ENCODE measurements at regions of chr2 and their contacts with region 1.

Region 1: GRCh38 chr2:219177552-219178376 is at the start of gene RETREG2:
- DNase-seq: peak; percentile 95
- H3K4me3 ChIP-seq: peak within 1 kb of the TSS; percentile 88
- H3K27ac ChIP-seq: peak within 1 kb of the TSS; percentile 92
- H3K4me1 ChIP-seq: peaks cover 18% of the 10 kb centered on the region
- CTCF ChIP-seq: peak; percentile 57
- total RNA-seq, gene RETREG2: 44.9 and 59.1 TPM in 2 replicates

Region 2: DNA sequence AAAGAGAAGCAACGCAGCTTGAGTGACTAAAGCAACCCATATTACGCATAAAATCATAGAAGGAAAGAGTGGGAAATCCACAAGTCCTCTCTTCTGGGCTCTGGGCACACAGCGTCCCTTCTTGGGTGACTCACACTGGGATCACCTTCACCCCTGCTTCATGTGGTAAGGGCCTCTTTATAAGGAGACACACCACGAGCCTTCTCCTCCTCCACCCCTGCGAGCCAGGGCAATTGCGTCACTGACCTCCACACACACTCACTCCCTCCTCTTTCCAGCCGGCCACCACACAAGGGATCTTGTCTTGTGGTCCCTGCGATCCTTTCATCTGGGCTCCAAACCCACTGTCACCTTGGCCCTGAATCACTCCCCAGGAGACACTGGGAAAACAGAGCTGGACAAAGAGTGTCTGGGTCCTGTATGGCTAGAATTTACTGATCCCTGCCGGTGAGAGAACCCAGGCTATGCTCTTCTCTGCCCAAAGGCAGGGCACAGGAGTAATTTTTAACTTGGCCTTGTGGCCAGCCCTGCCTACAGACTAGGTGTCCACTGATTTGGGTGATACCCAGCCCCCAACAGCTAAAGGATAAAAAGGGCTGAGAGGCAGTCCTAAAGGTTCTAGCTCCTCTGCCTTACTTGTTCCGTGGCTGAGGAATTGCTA is 52.4 kb before region 1 on chr2:
- CTCF ChIA-PET with region 1: no interaction called
- POLR2A ChIA-PET with region 1: no interaction called
- intact Hi-C with region 1: no loop called
- DNase-seq: no peak
- H3K4me3 ChIP-seq: no peak overlapping the region
- H3K27ac ChIP-seq: no peak overlapping the region
- H3K4me1 ChIP-seq: no peaks in the 10 kb centered on the region
- CTCF ChIP-seq: no peak

Region 3: DNA sequence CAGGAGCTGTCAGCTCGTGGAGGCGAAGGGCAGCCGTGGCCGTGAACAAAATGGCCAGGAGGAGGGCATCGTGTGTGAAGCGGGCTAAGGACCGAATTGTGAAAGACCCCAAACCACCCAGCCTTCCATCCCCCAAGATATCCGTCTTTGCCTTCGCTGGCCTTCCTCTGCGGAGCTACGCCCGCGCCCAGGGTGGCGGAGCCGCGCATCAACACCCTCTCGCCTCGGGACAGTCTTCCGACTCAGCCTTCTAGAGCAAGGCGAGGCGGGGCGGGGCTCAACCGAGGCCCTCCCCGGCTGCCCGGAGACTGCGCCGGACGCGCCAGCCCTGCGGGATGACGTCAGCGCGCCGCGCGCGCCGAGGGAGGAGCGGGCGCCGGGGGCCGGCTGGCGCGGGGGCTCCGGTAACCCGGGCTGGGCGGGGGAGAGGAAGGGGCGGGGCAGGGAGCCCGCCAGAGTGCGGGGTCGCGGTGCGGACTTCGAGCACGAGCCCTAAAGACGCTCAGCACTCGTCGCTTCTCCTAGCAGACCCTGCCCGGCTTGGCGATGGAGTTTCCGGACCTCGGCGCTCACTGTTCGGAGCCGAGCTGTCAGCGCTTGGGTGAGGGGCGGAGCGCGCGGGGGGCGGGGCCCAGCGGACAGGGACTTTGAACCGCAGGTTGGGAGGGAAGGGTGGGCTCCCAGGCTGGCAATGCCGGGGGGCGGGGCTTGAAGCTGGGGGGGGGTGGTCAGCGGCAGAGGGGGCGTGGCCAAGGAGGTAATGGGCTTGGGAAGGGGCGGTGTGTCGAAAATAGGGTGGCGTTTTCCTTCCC is 28.9 kb after region 1 on chr2 and contains the start of gene ZFAND2B:
- CTCF ChIA-PET with region 1: interaction called, 3 read pairs
- POLR2A ChIA-PET with region 1: interaction called, 23 read pairs
- intact Hi-C with region 1: loop called (anchors 1 kb)
- DNase-seq: peak; percentile 97
- H3K4me3 ChIP-seq: peak within 1 kb of the TSS; percentile 69
- H3K27ac ChIP-seq: peak within 1 kb of the TSS; percentile 76
- H3K4me1 ChIP-seq: peaks cover 17% of the 10 kb centered on the region
- CTCF ChIP-seq: no peak
- total RNA-seq, gene ZFAND2B: 42.4 and 51.6 TPM in 2 replicates

Region 4: DNA sequence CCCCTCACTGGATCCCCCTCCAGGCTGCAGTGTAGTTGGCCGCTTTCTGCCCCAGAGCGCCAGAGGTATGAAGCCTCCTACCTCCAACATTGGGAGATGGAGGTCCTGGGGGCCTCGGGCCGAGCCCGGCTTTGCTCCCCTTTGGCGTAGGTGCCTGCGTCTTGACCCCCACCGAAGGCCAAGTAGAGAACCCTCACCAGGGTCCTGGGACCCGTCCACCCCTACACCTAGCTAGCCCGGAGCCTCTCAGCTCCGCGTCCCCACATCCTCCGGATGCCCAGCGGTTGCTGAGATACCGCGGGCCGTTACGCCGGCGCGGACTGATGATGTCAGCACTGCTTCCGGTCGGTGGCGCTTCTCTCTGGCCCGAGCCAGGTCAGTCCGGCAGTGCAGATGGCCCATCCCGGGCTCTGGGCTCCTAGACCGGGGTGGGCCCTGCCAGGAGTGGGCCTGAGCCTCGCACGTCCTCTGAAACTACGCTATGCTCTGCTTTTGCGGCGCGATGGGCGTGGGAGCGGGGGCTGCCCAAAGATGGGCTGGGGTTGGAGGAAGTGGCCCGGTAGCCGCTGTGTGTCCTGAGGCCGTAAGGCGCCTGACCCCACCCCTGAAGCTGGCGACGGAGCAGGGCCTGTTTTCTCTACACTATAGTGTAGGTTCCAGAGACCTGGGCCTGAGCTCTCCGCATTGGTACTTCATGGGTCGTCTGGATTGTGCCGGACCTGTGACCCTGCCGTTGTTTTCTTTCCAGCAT is 67.6 kb after region 1 on chr2 and contains the starts of genes GLB1L and STK16:
- CTCF ChIA-PET with region 1: interaction called, 3 read pairs
- POLR2A ChIA-PET with region 1: interaction called, 17 read pairs
- intact Hi-C with region 1: no loop called
- DNase-seq: peak; percentile 94
- H3K4me3 ChIP-seq: peak within 1 kb of the TSS; percentile 84
- H3K27ac ChIP-seq: peak within 1 kb of the TSS; percentile 96
- H3K4me1 ChIP-seq: peaks cover 54% of the 10 kb centered on the region
- CTCF ChIP-seq: no peak
- total RNA-seq, gene GLB1L: 2.7 and 8.6 TPM in 2 replicates
- total RNA-seq, gene STK16: 19.6 and 23.4 TPM in 2 replicates

Region 5: DNA sequence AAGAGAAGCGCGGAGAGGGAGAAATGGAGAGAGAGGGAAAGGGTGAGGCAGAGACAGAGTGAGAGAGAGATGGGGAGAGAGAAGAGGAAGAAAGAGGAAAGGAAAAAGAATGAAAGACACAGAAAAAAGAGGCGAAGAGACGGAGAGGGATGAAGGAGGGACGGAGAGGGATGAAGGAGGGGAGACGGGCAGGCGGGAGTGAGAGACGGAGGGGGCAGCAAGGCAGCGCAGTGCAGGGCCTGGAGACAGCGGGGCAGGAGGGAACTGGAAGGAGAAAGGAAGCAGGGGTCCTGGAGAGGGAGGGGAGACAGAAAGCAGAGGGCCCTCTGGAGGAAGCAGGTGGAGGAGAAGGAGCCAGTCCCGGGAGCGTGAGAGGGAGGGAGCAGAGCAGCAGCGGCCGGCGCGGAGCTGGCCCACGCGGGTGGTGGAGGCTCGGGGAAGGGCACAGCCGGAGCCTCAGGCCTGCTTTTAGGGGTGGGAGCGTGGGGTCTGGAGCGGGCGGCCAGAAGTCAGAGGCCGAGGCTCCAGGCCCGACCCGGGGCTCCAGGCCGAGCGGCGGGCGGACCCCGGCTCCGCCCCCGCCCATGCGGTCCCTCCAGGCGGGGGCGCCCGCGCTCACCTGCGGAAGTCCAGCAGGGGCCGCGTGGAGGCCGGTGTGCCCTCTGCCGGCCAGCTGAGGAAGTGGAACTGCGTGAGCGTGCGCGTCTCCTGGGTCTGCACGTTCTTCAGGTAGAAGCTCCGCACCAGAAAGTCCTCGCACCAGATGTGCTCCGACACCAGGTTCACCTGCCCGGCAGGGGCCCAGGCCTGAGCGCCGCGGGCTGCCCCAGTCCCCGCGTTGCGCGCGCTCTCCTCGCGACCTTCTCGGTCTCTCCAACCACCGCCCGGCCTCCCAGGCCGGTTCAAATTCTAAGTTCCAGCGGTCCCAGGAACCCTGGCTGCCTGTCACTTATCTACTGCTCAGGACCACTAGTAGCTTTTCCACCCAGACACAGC is 116.9 kb after region 1 on chr2:
- CTCF ChIA-PET with region 1: interaction called, 4 read pairs
- POLR2A ChIA-PET with region 1: interaction called, 6 read pairs
- intact Hi-C with region 1: loop called (anchors 1 kb)
- DNase-seq: peak; percentile 92
- H3K4me3 ChIP-seq: peak overlapping the region; percentile 64
- H3K27ac ChIP-seq: no peak overlapping the region
- H3K4me1 ChIP-seq: peaks cover 21% of the 10 kb centered on the region
- CTCF ChIP-seq: peak; percentile 97

Region 6: DNA sequence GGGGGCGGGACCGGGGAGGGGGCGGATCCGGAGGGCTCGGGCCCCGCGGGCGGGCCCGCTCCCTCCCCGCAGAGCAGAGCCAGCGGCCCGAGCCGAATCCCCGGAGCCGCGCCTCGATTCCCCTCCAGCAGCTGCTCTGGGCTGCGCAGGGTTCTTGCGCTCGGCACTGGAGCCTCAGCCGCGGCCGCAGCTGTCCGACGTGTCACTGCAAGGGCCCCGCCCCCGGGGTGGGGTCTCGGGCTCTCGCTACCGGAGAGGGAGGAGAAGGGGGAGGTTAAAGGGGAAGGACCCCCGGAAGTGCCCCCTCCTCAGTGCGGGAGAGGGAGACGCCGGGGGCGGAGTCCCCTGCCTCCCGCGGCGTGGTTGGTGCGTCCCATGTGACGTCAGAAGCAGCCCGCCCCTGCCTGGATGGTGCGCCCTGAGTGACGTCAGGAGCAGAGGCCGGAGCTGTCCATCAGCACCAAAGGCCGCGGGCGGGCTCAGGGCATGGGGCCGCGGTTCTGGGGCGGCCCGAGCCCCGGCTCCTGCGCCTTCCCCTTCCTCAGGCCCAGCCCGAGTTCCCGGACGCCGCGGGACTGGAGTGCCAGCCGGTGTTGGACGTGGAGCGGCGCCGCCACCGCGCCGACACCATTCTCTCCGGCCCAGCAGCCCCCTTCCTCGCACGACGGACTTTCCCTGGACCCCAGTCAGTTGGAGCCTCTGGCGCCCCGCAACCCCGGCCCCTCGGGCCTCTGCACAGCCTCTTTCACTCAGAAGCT is 366.0 kb after region 1 on chr2 and contains the starts of genes CHPF and TMEM198:
- CTCF ChIA-PET with region 1: no interaction called
- POLR2A ChIA-PET with region 1: interaction called, 7 read pairs
- intact Hi-C with region 1: loop called (anchors 5 kb)
- DNase-seq: peak; percentile 99
- H3K4me3 ChIP-seq: peak within 1 kb of the TSS; percentile 80
- H3K27ac ChIP-seq: peak within 1 kb of the TSS; percentile 76
- H3K4me1 ChIP-seq: no peaks in the 10 kb centered on the region
- CTCF ChIP-seq: no peak
- total RNA-seq, gene CHPF: 14.5 and 24.1 TPM in 2 replicates
- total RNA-seq, gene TMEM198: 1.4 and 2.5 TPM in 2 replicates

Measured in OCI-LY7 (cell line).